Right ventricle myocardium superior (tissue), 1 donor: ENCODE measurements at regions of chr11 and their contacts with region 1.

Region 1: DNA sequence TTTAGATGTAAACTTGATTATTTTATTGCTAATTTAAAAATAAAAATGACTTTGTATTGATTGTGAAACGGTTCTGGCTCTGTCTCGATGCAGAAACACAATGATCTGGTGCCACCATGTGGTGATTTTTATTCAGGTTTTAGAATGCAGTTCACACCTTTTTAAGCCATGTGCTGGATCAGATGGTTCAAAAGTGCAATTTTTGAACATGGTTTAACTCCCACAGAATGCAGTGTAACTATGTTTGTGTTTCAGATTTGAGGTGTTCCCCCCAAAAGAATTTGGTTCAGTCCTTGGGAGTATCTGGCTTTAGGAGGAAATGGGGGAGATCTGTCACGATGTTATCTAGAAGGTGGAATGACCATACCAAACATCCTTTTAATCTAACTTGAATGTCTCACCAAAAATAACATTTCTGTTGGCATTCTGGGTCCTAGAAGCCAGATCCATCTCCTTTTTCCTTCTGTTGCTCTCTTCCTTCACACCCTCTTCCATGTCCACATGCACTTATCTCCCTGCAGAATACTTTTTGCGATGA is 7.9 kb downstream of the MRPL16 start:
- DNase-seq: no peak
- ATAC-seq: peak; percentile 89

Region 2: DNA sequence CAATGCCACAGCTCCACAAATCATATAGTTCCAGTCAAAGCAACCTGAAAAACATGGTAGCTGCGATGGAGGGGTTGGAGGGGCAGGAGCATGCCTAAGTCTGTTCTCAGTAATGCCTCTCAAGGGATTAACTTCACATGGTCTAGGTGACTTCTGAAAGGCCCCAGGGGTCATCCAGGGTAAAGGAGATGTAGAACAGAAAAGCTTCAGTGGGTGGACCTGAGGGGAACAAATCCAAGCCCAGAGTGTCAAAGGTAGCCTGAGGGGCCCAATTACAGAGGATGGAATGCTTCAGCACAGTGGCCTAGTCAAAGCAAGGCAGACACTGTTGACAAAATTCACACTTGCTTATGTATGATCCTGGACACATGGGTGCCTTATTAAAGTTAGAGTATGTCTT is 268.0 kb before region 1 on chr11:
- intact Hi-C with region 1: loop called (anchors 5 kb)
- DNase-seq: no peak
- ATAC-seq: no peak

Region 3: DNA sequence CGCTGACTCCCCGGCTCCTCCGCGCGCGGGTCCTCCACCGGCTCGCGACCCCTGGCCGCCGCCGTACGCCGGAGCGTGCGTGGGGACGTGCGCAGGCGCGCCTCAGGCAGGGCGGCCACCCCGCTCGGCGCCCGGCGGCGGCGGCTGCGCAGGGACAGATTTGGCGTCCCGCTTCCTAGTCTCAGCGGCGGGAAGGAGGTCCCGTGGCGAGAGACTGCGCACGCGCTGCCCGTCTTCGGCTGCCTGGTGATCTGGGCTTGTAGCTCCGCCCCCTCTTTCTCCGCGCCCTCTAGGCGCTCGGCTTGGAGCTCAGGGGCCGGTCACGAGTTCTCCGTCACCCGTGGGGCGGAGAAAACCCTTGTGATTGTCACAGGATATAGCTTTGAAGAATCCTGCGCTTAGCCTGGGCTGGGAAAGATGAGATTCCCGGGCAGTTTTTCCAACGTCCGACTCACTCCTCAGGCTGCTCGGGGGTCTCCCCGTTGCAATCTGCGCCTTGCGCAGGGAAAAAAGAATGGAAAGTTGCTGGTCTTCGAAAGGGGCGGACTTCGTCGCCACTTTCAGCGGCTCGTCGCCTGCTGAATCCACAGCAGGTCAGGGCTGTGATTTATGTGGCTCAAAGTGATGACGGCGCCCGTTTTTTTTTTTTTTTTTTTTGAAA is 133.6 kb before region 1 on chr11 and contains the start of gene PATL1:
- intact Hi-C with region 1: loop called (anchors 10 kb)
- DNase-seq: peak; percentile 100
- ATAC-seq: peak; percentile 98
- total RNA-seq, gene PATL1: 21.6 TPM

Region 4: GRCh38 chr11:59754859-59755700 is 47.6 kb before region 1 on chr11 and contains the start of gene STX3:
- intact Hi-C with region 1: loop called (anchors 1 kb)
- DNase-seq: peak; percentile 83
- ATAC-seq: peak; percentile 94
- total RNA-seq, gene STX3: 9.2 TPM